A673 (cell line): ENCODE measurements at regions of chr5 and their contacts with region 1.

Region 1: DNA sequence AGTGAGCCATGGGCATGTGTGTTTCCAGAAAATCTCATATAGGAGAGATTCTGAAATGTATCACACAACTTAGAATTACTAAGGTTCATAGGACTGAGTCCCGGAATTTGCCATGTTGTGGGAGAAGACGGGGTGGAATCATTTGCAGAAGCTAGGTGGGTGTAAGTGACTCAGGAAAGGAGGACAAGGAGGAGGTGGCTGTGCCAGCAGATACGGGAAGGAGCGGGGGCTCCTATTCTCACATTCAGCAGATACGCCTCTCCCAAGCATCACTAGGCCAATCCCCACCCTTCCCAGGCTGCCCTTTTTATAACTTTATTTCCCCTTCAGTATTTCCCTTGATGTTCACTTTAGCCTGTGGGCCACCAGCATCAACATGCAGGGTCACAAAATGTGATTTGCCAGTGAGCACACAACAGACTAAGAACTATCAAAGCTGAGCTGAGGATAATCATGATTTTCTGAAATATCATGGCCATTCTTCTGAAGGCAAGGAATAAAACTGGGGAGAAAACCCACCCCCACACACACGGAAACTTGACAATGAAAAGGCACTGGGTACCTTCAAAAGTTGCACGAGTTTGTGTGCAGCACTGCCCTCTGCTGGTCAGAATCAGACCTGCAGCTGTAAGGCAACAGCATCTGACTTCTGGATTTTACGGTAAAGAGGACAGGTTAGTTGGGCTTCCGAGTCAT is 133.2 kb downstream of the MTX3 start:
- DNase-seq: peak; percentile 72
- H3K4me3 ChIP-seq: no peak overlapping the region
- H3K27ac ChIP-seq: no peak overlapping the region
- H3K4me1 ChIP-seq: no peaks in the 10 kb centered on the region
- H3K27me3 ChIP-seq: peaks cover 18% of the 10 kb centered on the region
- CTCF ChIP-seq: peak; percentile 97

Region 2: GRCh38 chr5:79702606-79703382 is 155.1 kb before region 1 on chr5:
- CTCF ChIA-PET with region 1: no interaction called
- POLR2A ChIA-PET with region 1: no interaction called
- intact Hi-C with region 1: loop called (anchors 10 kb)
- DNase-seq: peak; percentile 33
- H3K4me3 ChIP-seq: no peak overlapping the region
- H3K27ac ChIP-seq: no peak overlapping the region
- H3K4me1 ChIP-seq: no peaks in the 10 kb centered on the region
- H3K27me3 ChIP-seq: no peaks in the 10 kb centered on the region
- CTCF ChIP-seq: peak; percentile 62

Region 3: GRCh38 chr5:80125962-80126480 is 268.2 kb after region 1 on chr5:
- CTCF ChIA-PET with region 1: no interaction called
- POLR2A ChIA-PET with region 1: no interaction called
- intact Hi-C with region 1: no loop called
- DNase-seq: no peak
- H3K4me3 ChIP-seq: no peak overlapping the region
- H3K27ac ChIP-seq: no peak overlapping the region
- H3K4me1 ChIP-seq: peaks cover 5% of the 10 kb centered on the region
- H3K27me3 ChIP-seq: no peaks in the 10 kb centered on the region
- CTCF ChIP-seq: no peak